A549 (cell line): ENCODE measurements at regions of chr5 and their contacts with region 1.

Region 1: DNA sequence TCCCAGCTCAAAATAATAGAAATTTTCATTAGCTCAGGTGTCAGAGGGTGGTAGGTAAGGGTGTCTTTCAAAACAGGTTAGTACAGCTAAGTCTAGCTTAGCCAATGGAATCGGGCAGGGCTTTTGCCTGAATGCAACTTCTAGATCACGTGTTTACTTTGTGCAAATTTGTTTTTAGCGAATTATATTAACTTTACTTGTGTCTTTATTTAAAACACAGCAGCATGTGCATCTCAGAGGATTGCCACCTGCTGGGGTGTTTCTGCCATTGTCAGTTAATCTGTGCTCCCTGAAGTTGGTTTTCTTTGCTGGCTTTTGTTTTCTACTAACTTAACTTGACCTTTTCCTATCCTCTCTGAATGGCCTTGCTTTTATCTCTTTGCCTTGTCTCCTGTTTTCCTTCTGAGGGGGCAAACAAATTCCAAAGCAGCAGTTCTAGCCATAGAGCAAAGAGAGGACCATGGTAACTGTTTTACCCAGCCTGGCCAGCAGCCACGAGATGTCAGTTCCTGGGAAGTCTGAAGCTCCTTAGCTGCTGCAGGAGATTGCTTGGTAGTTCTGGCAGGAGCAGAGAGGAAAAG is 67.6 kb downstream of the ARHGEF28 start:
- DNase-seq: peak; percentile 40 to 50
- ATAC-seq: peak; percentile 54 to 75; a peak in 4 of 6 replicates
- H3K4me3 ChIP-seq: no peak overlapping the region
- H3K27ac ChIP-seq: peak overlapping the region; percentile 78 to 89
- H3K4me1 ChIP-seq: peaks cover 64% of the 10 kb centered on the region
- CTCF ChIP-seq: peak; percentile 73
- EP300 ChIP-seq: no peak
- POLR2A ChIP-seq: no peak
- RAD21 ChIP-seq: peak; percentile 58 to 72

Region 2: GRCh38 chr5:73625944-73626811 is 67.4 kb before region 1 on chr5 and contains the start of gene ARHGEF28:
- CTCF ChIA-PET with region 1: interaction called, 33 read pairs
- POLR2A ChIA-PET with region 1: interaction called, 9 read pairs
- DNase-seq: peak; percentile 73 to 77
- ATAC-seq: peak; percentile 88 to 91
- H3K4me3 ChIP-seq: peak within 1 kb of the TSS; percentile 93
- H3K27ac ChIP-seq: peak within 1 kb of the TSS; percentile 98
- H3K4me1 ChIP-seq: peaks cover 59% of the 10 kb centered on the region
- CTCF ChIP-seq: no peak
- EP300 ChIP-seq: no peak; a peak in 1 of 5 replicates
- POLR2A ChIP-seq: peak; percentile 40
- RAD21 ChIP-seq: peak in 1 of 2 experiments; percentile 30; a peak in 1 of 5 replicates
- polyA plus RNA-seq, gene ARHGEF28: 22.3 and 28.9 TPM in 2 replicates

Region 3: DNA sequence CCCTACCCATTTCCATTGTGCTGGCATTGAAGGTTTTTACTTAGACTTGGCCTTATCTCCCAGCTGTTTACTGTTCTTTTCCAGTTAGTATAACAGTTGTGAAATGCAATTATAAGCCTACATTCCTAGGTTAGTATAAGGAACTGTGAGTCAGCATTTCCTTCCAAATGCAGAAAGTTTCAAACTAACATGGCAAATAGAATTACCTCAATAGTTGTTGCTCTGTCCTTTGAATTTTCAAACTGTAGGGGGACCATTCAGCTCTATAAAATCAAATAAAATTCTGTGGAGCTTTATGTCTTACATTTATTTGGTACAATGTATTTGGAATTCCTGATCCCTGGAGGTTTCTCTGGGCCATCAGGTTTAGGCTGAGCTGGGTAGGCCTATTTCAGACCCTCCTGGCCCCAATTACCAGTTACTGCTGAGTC is 20.4 kb before region 1 on chr5:
- CTCF ChIA-PET with region 1: interaction called, 34 read pairs
- POLR2A ChIA-PET with region 1: no interaction called
- DNase-seq: peak in 1 of 2 experiments; percentile 71
- ATAC-seq: peak; percentile 64 to 75
- H3K4me3 ChIP-seq: no peak overlapping the region
- H3K27ac ChIP-seq: peak overlapping the region; percentile 85 to 92
- H3K4me1 ChIP-seq: peaks cover 76% of the 10 kb centered on the region
- CTCF ChIP-seq: no peak
- EP300 ChIP-seq: 0 out of 5 replicates have a peak, but pooled peaks of 1 of the 2 experiments have one; percentile 33
- POLR2A ChIP-seq: no peak
- RAD21 ChIP-seq: no peak

Region 4: GRCh38 chr5:73678322-73678740 is 15.2 kb before region 1 on chr5:
- CTCF ChIA-PET with region 1: interaction called, 34 read pairs
- POLR2A ChIA-PET with region 1: no interaction called
- DNase-seq: peak; percentile 51 to 84
- ATAC-seq: peak; percentile 97 to 100
- H3K4me3 ChIP-seq: no peak overlapping the region; the same call in 2 of the 3 replicates
- H3K27ac ChIP-seq: peak overlapping the region; percentile 86 to 90
- H3K4me1 ChIP-seq: peaks cover 57% of the 10 kb centered on the region
- CTCF ChIP-seq: no peak
- EP300 ChIP-seq: no peak
- POLR2A ChIP-seq: no peak
- RAD21 ChIP-seq: peak; percentile 15 to 34; a peak in 2 of 5 replicates

Region 5: DNA sequence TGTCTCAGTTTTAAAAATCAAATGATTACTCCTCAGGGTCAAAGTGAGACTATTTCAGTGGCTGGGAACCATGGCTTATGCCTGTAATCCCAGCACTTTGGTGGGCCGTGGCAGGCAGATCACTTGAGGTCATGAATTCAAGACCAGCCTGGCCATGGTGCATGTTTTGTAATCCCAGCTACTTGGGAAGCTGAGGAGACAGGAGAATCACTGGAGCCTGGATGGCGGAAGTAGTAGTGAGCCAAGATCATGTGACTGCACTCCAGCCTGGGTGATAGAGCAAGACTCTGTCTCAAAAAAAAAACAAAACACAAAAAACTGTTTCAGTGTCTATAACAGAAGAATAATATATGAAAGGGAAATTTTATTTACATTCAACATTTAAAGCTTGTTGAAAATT is 115.3 kb after region 1 on chr5:
- CTCF ChIA-PET with region 1: no interaction called
- POLR2A ChIA-PET with region 1: no interaction called
- DNase-seq: no peak
- ATAC-seq: no peak
- H3K4me3 ChIP-seq: no peak overlapping the region
- H3K27ac ChIP-seq: 0 out of 6 replicates have a peak overlapping the region, but pooled peaks of 1 of the 2 experiments have one; percentile 20
- H3K4me1 ChIP-seq: peaks cover 10% of the 10 kb centered on the region
- CTCF ChIP-seq: no peak
- EP300 ChIP-seq: no peak
- POLR2A ChIP-seq: no peak
- RAD21 ChIP-seq: no peak